Aorta (tissue), 5 donors: ENCODE measurements at regions of chr4 and their contacts with region 1.

Region 1: DNA sequence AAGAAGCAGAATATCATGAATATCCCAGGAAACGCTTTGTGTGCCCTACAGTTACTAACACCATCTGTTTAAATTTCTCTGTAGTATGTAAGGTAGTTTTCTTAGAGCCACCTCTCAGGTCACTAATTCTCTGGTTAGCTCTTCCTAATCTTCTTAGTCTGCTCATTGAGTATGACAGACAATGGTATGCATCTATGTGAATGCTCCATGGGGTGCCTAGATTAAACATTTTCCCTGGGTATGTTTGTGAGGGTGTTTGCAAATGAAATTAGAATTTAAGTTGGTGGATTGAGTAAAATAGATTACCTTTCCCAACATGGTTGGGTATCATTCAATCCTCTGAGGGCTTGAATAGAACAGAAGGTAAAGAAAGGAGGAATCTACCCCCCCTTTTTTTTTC is 233.0 kb downstream of the PCDH18 start:
- DNase-seq: no peak
- ATAC-seq: no peak
- H3K4me3 ChIP-seq: no peak overlapping the region
- H3K27ac ChIP-seq: no peak overlapping the region
- H3K4me1 ChIP-seq: no peaks in the 10 kb centered on the region
- H3K27me3 ChIP-seq: no peaks in the 10 kb centered on the region

Region 2: GRCh38 chr4:137249112-137249511 is 50.2 kb before region 1 on chr4:
- intact Hi-C with region 1: no loop called
- DNase-seq: no peak
- ATAC-seq: no peak
- H3K4me3 ChIP-seq: no peak overlapping the region
- H3K27ac ChIP-seq: no peak overlapping the region
- H3K4me1 ChIP-seq: no peaks in the 10 kb centered on the region
- H3K27me3 ChIP-seq: no peaks in the 10 kb centered on the region

Region 3: GRCh38 chr4:137474711-137475301 is 175.5 kb after region 1 on chr4:
- intact Hi-C with region 1: no loop called
- DNase-seq: no peak
- ATAC-seq: no peak
- H3K4me3 ChIP-seq: no peak overlapping the region
- H3K27ac ChIP-seq: no peak overlapping the region
- H3K4me1 ChIP-seq: no peaks in the 10 kb centered on the region
- H3K27me3 ChIP-seq: no peaks in the 10 kb centered on the region

Region 4: DNA sequence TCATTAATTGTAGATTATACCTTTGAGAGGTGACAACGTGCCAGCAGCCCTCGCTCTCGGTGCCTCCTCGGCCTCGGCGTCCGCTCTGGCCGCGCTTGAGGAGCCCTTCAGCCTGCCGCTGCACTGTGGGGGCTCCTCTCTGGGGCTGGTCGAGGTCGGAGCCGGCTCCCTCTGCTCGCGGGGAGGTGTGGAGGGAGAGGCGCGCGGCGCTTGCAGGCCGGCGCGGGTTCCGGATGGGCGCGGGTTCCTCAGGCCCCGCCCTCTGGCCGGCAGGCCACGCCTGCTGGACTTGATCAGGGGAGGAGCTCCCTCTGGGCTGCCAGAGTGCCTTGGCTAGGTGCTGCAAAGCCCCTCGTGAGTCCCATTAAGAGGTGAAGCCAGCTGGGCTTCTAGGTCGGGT is 554.2 kb after region 1 on chr4:
- intact Hi-C with region 1: loop called in 1 of 2 experiments (anchors 5 kb)
- DNase-seq: peak; percentile 19 to 63
- ATAC-seq: no peak
- H3K4me3 ChIP-seq: no peak overlapping the region
- H3K27ac ChIP-seq: no peak overlapping the region
- H3K4me1 ChIP-seq: no peaks in the 10 kb centered on the region
- H3K27me3 ChIP-seq: no peaks in the 10 kb centered on the region